ENCODE measurements at regions of chr7 and their contacts with region 1.

Region 1: GRCh38 chr7:149071641-149072437 is 18.7 kb downstream of the ZNF786 start:
- DNase-seq: no peak
- ATAC-seq: no peak
- H3K4me3 ChIP-seq: no peak overlapping the region
- H3K27ac ChIP-seq: no peak overlapping the region
- H3K4me1 ChIP-seq: no peaks in the 10 kb centered on the region
- H3K27me3 ChIP-seq: no peaks in the 10 kb centered on the region
- CTCF ChIP-seq: peak in 1 of 3 experiments; percentile 8; a peak in 1 of 6 replicates
- EP300 ChIP-seq: no peak
- POLR2A ChIP-seq: no peak
- RAD21 ChIP-seq: no peak

Region 2: GRCh38 chr7:147818317-147818716 is 1253.5 kb before region 1 on chr7:
- CTCF ChIA-PET with region 1: no interaction called
- POLR2A ChIA-PET with region 1: no interaction called
- RAD21 ChIA-PET with region 1: no interaction called
- SMC1A ChIA-PET with region 1: no interaction called
- in situ Hi-C with region 1: no loop called
- intact Hi-C with region 1: no loop called
- DNase-seq: no peak
- ATAC-seq: no peak
- H3K4me3 ChIP-seq: no peak overlapping the region
- H3K27ac ChIP-seq: no peak overlapping the region
- H3K4me1 ChIP-seq: no peaks in the 10 kb centered on the region
- H3K27me3 ChIP-seq: no peaks in the 10 kb centered on the region
- CTCF ChIP-seq: no peak
- EP300 ChIP-seq: no peak
- POLR2A ChIP-seq: no peak
- RAD21 ChIP-seq: no peak

Region 3: DNA sequence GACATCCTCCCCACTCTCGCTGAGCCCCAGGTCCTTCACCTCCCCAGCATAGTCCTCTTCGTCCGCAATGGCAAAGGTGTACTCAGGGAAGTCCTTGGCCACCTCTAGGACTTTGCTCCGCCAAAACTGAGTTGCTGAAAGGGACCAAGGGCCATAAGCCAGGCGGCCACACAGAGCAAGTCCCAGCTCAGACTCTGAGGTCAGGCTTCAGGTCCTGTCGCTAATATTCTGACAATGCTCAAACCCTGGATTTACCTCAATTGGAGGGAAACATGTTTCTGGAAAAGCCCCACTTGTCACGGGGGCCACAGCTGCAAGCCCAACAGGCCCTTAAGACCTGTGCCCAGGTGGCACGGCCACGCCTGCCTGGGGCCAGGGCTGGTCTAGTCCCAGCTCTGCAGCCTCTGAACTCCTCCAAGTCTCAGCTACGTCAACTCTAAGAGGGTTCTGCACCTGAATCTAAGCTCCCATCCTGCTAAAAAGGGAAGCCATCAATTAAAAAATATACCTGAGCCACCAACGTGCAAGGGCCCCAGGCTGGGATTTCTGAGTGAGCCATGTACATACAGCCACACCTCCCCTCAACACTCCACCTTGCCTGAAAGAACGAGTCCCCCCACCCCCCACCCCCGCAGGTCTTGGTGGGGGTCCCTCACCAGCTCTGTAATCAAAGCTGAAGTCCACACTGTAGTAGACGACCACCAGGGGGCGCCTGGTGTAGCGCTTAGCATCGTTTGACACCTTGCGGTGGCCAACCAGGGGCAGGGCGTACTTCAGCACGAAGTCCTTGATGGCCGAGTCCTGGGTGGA is 66.4 kb before region 1 on chr7:
- CTCF ChIA-PET with region 1: interaction called, 99 read pairs
- POLR2A ChIA-PET with region 1: no interaction called
- RAD21 ChIA-PET with region 1: no interaction called
- SMC1A ChIA-PET with region 1: no interaction called
- in situ Hi-C with region 1: no loop called
- intact Hi-C with region 1: no loop called
- DNase-seq: no peak
- ATAC-seq: peak; percentile 99
- H3K4me3 ChIP-seq: no peak overlapping the region
- H3K27ac ChIP-seq: no peak overlapping the region
- H3K4me1 ChIP-seq: no peaks in the 10 kb centered on the region
- H3K27me3 ChIP-seq: no peaks in the 10 kb centered on the region
- CTCF ChIP-seq: peak; percentile 70 to 81 (median 77)
- EP300 ChIP-seq: no peak
- POLR2A ChIP-seq: no peak; the same call in 1 of the 2 replicates
- RAD21 ChIP-seq: peak; percentile 70

Region 4: GRCh38 chr7:149046416-149046815 is 25.4 kb before region 1 on chr7:
- CTCF ChIA-PET with region 1: no interaction called
- POLR2A ChIA-PET with region 1: no interaction called
- RAD21 ChIA-PET with region 1: no interaction called
- SMC1A ChIA-PET with region 1: no interaction called
- in situ Hi-C with region 1: no loop called
- intact Hi-C with region 1: no loop called
- DNase-seq: no peak
- ATAC-seq: no peak
- H3K4me3 ChIP-seq: no peak overlapping the region
- H3K27ac ChIP-seq: no peak overlapping the region
- H3K4me1 ChIP-seq: no peaks in the 10 kb centered on the region
- H3K27me3 ChIP-seq: no peaks in the 10 kb centered on the region
- CTCF ChIP-seq: no peak
- EP300 ChIP-seq: no peak
- POLR2A ChIP-seq: no peak
- RAD21 ChIP-seq: no peak

Region 5: GRCh38 chr7:149569025-149569725 is 497.3 kb after region 1 on chr7:
- CTCF ChIA-PET with region 1: no interaction called
- POLR2A ChIA-PET with region 1: no interaction called
- RAD21 ChIA-PET with region 1: no interaction called
- SMC1A ChIA-PET with region 1: no interaction called
- in situ Hi-C with region 1: no loop called
- intact Hi-C with region 1: no loop called
- DNase-seq: no peak
- ATAC-seq: no peak
- H3K4me3 ChIP-seq: no peak overlapping the region
- H3K27ac ChIP-seq: no peak overlapping the region
- H3K4me1 ChIP-seq: no peaks in the 10 kb centered on the region
- H3K27me3 ChIP-seq: no peaks in the 10 kb centered on the region
- CTCF ChIP-seq: no peak
- EP300 ChIP-seq: no peak
- POLR2A ChIP-seq: no peak
- RAD21 ChIP-seq: no peak

Region 6: DNA sequence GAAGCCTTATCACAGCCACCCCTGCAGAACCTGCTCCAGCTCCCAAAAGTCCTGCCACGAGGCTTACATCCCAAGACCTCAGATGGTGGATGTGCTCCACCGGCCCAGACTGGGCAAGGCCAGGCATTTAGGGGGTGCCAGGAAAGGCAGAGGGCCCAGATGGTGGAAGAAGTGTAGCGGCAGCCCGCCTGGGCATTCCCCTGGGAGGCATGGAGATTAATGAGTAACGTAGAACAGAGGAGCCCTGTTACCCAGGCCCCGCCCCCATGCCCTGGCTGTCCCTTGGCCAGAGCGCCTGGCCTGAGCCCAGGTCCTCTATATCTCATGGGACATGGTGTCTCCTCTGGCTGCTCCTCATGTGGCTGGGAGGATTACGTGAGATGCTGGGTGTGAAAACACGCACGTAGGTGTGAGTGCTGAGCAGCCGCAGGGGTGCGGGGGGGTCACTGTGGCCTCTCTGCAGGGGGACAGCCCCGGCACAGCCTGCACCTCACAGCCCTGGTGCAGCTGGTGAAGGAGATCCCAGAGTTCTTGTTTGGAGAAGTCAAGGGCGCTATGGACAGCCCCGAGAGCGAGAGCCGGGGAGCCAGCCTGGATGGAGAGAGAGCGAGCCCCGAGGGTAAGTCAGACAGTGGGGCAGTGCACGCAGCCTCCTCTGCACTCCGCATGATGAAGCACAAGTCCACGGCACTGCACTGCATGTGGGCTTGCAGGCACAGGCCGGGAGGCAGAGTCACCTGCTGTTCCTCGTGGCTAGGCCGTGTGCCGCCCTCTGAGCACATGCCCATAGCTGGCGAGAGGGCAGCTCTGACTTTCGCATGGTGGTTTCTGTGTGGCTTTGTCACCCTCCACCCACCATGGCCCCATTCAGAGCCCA is 648.8 kb after region 1 on chr7:
- CTCF ChIA-PET with region 1: no interaction called
- POLR2A ChIA-PET with region 1: no interaction called
- RAD21 ChIA-PET with region 1: no interaction called
- SMC1A ChIA-PET with region 1: no interaction called
- in situ Hi-C with region 1: no loop called
- intact Hi-C with region 1: no loop called
- DNase-seq: no peak
- ATAC-seq: peak; percentile 79
- H3K4me3 ChIP-seq: no peak overlapping the region
- H3K27ac ChIP-seq: no peak overlapping the region; the same call in 1 of the 2 replicates
- H3K4me1 ChIP-seq: peaks cover 8% of the 10 kb centered on the region
- H3K27me3 ChIP-seq: no peaks in the 10 kb centered on the region
- CTCF ChIP-seq: no peak
- EP300 ChIP-seq: peak; percentile 17 to 21; a peak in 1 of 4 replicates
- POLR2A ChIP-seq: no peak
- RAD21 ChIP-seq: no peak